ENCODE measurements at regions of chr6 and their contacts with region 1.

Region 1: DNA sequence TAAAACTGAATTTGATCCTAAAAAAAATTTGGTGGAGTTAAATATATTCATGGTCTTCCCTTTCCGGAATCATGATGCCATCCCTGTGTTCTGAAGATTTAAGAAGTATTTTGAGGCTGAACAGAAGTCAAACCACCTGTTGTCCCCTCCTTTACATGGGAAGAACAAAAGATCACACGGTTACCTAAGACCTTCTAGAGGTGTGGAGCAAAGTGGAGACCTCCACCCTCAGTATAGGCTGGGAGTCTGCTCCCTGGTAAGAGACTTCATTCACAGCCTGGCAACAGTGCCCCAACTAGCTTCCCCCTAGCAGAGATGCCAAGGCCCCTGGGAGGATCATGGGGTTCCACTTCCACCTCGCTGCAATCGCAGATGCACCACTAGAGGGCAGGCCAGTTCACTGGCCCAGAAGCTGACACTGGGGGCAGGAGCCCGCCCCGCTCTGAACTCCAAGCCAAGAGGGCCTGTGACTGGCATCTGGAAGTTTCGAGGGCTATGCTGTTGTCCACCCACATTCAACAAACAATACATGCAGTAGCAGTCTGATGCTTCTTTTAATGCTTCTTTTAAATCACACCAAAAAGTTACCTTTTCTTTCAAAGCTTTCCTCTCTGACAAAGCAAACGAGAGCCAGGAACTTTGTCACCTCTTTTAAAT is 19.5 kb upstream of the UBE2J1 start:
- DNase-seq: peak; percentile 80 to 83
- H3K4me3 ChIP-seq: no peak overlapping the region
- H3K27ac ChIP-seq: peak overlapping the region; percentile 11 to 65 (median 56)
- H3K4me1 ChIP-seq: peaks cover 8 to 23% of the 10 kb centered on the region in 2 donors
- H3K27me3 ChIP-seq: no peaks in the 10 kb centered on the region
- CTCF ChIP-seq: peak; percentile 82 to 95 (median 86)
- POLR2A ChIP-seq: no peak

Region 2: DNA sequence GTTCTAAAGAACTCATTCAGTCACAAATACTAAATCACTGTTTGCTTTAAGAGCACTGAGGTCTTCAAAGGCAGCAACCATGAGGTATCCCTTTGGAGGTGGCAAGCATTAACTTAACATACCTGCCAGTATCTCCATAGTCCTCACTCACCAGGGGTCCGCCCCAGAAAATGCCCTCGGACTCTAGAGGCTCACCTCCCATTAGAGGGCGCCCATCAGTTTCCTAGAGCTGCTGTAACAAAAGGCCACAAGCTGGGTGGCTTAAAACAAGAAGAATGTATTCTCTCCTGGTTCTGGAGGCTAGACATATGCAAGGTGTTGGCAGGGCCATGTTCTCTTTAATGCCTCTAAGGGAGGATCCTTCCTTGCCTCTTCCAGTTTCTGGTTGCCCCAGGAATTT is 396.6 kb before region 1 on chr6:
- intact Hi-C with region 1: loop called (anchors 10 kb)
- DNase-seq: no peak
- H3K4me3 ChIP-seq: no peak overlapping the region
- H3K27ac ChIP-seq: no peak overlapping the region
- H3K4me1 ChIP-seq: no peaks in the 10 kb centered on the region
- H3K27me3 ChIP-seq: no peaks in the 10 kb centered on the region
- CTCF ChIP-seq: no peak
- POLR2A ChIP-seq: no peak

Region 3: GRCh38 chr6:89311853-89312531 is 60.0 kb before region 1 on chr6:
- intact Hi-C with region 1: loop called (anchors 10 kb)
- DNase-seq: peak; percentile 74 to 79
- H3K4me3 ChIP-seq: no peak overlapping the region
- H3K27ac ChIP-seq: peak overlapping the region in 2 of 3 donors; percentile 15 to 76
- H3K4me1 ChIP-seq: peaks cover 9 to 22% of the 10 kb centered on the region in 2 donors
- H3K27me3 ChIP-seq: no peaks in the 10 kb centered on the region
- CTCF ChIP-seq: peak in 5 of 6 experiments; percentile 30 to 69 (median 50)
- POLR2A ChIP-seq: no peak

Region 4: GRCh38 chr6:89330910-89331309 is 41.1 kb before region 1 on chr6:
- intact Hi-C with region 1: no loop called
- DNase-seq: no peak
- H3K4me3 ChIP-seq: no peak overlapping the region
- H3K27ac ChIP-seq: no peak overlapping the region
- H3K4me1 ChIP-seq: no peaks in the 10 kb centered on the region
- H3K27me3 ChIP-seq: no peaks in the 10 kb centered on the region
- CTCF ChIP-seq: no peak
- POLR2A ChIP-seq: no peak

Region 5: GRCh38 chr6:89527634-89528033 is 155.7 kb after region 1 on chr6:
- intact Hi-C with region 1: no loop called
- DNase-seq: no peak
- H3K4me3 ChIP-seq: no peak overlapping the region
- H3K27ac ChIP-seq: no peak overlapping the region
- H3K4me1 ChIP-seq: no peaks in the 10 kb centered on the region
- H3K27me3 ChIP-seq: no peaks in the 10 kb centered on the region
- CTCF ChIP-seq: no peak
- POLR2A ChIP-seq: no peak